CD4-positive, alpha-beta T cell (primary cell): ENCODE measurements at regions of chr3 and their contacts with region 1.

Region 1: DNA sequence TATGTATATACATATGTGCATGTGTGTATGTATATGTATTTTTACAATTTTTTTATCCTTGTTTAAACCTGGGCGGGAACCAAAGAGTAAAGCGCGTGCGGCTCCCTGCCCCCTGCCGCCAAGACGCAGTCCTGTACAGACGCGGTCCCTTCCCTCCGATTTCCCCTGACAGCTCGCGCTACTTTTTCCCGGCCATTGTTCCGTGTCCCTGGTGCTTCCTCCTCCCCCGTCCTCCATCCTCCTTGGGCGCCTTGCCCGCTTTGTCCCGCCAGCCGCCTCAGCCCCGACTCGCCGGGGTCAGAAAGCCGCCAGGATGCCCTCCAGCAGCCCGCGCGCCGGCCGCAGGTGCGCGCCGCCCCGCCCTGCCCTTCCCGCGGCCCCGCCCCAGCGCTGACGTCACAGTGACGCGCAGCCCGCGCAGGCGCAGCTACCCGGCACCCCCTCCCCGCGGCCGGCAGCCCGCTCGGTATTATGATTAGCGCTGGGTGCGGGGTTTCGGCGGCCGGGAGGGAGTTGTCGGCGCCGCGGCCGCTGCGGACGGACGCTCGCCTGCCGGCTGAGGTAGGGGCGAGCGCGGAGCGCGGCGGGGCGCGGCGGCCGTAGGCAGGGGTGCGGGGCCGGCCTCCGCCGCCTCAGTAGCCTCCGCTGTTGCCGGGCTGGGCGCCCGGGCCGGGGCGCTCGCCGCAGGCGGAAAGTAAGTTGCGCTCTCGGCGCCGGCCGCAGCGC is at the start of gene SNRK:
- DNase-seq: peak; percentile 84 to 97 (median 92)
- ATAC-seq: peak; percentile 79
- H3K4me3 ChIP-seq: peak within 1 kb of the TSS; percentile 70
- H3K4me3 Mint-ChIP-seq: peak within 1 kb of the TSS; percentile 100
- H3K27ac ChIP-seq: peak within 1 kb of the TSS; percentile 77 to 81
- H3K27ac Mint-ChIP-seq: peak within 1 kb of the TSS; percentile 100
- H3K4me1 ChIP-seq: peaks cover 32% of the 10 kb centered on the region
- H3K4me1 Mint-ChIP-seq: peaks cover 37% of the 10 kb centered on the region
- H3K27me3 ChIP-seq: no peaks in the 10 kb centered on the region
- H3K27me3 Mint-ChIP-seq: peaks cover 4% of the 10 kb centered on the region
- CTCF ChIP-seq: peak; percentile 56
- total RNA-seq, gene SNRK: 215 to 217 TPM

Region 2: GRCh38 chr3:43105596-43106292 is 180.5 kb before region 1 on chr3 and contains the start of gene POMGNT2:
- CTCF ChIA-PET with region 1: no interaction called
- POLR2A ChIA-PET with region 1: no interaction called
- intact Hi-C with region 1: loop called in 1 of 2 experiments (anchors 5 kb)
- DNase-seq: peak; percentile 77 to 95 (median 87)
- ATAC-seq: peak; percentile 94
- H3K4me3 ChIP-seq: peak within 1 kb of the TSS; percentile 68
- H3K4me3 Mint-ChIP-seq: peak within 1 kb of the TSS; percentile 89
- H3K27ac ChIP-seq: no peak within 1 kb of the TSS
- H3K27ac Mint-ChIP-seq: peak within 1 kb of the TSS; percentile 56
- H3K4me1 ChIP-seq: peaks cover 17% of the 10 kb centered on the region
- H3K4me1 Mint-ChIP-seq: peaks cover 30% of the 10 kb centered on the region
- H3K27me3 ChIP-seq: no peaks in the 10 kb centered on the region
- H3K27me3 Mint-ChIP-seq: no peaks in the 10 kb centered on the region
- CTCF ChIP-seq: no peak
- total RNA-seq, gene POMGNT2: 6.8 to 8.4 TPM

Region 3: DNA sequence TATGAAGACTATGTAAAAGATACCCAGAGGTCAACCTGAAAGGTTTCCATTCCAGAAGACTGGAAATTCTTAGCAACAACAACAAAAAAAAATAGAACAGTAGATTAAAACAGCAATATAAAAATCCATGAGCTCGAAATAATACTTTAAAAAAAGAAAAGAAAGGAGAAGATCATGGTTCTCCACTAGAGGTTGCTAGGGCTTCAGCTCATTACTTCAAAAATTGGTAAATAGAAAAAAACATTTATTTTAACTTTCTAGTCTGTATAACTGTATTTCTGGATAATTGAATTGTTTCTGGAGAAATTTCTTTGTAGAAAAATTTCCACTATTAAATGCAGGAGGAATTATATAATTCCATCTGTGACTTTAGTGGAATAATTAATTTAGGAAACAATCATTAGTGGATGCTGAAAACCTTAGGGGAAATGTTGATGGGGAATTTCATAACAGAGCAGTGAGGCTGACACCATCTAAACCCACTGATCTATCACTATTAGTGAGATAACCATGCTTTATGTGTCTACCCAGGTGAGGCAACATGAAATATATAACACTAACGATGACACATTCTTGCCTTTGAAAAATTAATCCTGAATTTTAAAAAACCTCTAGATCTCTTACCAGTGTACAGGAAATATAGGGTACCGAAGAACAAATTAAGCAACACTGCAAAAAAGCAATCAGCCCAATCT is 62.5 kb before region 1 on chr3:
- CTCF ChIA-PET with region 1: interaction called, 3 read pairs
- POLR2A ChIA-PET with region 1: interaction called, 22 read pairs
- intact Hi-C with region 1: loop called in 1 of 2 experiments (anchors 5 kb)
- DNase-seq: peak in 3 of 14 experiments; percentile 49 to 56 (median 52)
- ATAC-seq: no peak
- H3K4me3 ChIP-seq: no peak overlapping the region
- H3K4me3 Mint-ChIP-seq: peak overlapping the region; percentile 2
- H3K27ac ChIP-seq: no peak overlapping the region
- H3K27ac Mint-ChIP-seq: peak overlapping the region; percentile 86
- H3K4me1 ChIP-seq: peaks cover 28% of the 10 kb centered on the region
- H3K4me1 Mint-ChIP-seq: peaks cover 60% of the 10 kb centered on the region
- H3K27me3 ChIP-seq: no peaks in the 10 kb centered on the region
- H3K27me3 Mint-ChIP-seq: no peaks in the 10 kb centered on the region
- CTCF ChIP-seq: peak; percentile 65

Region 4: GRCh38 chr3:43296565-43296964 is 10.3 kb after region 1 on chr3:
- CTCF ChIA-PET with region 1: interaction called, 5 read pairs
- POLR2A ChIA-PET with region 1: interaction called, 122 read pairs
- intact Hi-C with region 1: loop called in 1 of 2 experiments (anchors 1 kb)
- DNase-seq: peak; percentile 32 to 90 (median 58)
- ATAC-seq: peak; percentile 91
- H3K4me3 ChIP-seq: peak overlapping the region; percentile 35
- H3K4me3 Mint-ChIP-seq: peak overlapping the region; percentile 73
- H3K27ac ChIP-seq: peak overlapping the region; percentile 59 to 68
- H3K27ac Mint-ChIP-seq: peak overlapping the region; percentile 91
- H3K4me1 ChIP-seq: peaks cover 53% of the 10 kb centered on the region
- H3K4me1 Mint-ChIP-seq: peaks cover 87% of the 10 kb centered on the region
- H3K27me3 ChIP-seq: no peaks in the 10 kb centered on the region
- H3K27me3 Mint-ChIP-seq: no peaks in the 10 kb centered on the region
- CTCF ChIP-seq: no peak

Region 5: DNA sequence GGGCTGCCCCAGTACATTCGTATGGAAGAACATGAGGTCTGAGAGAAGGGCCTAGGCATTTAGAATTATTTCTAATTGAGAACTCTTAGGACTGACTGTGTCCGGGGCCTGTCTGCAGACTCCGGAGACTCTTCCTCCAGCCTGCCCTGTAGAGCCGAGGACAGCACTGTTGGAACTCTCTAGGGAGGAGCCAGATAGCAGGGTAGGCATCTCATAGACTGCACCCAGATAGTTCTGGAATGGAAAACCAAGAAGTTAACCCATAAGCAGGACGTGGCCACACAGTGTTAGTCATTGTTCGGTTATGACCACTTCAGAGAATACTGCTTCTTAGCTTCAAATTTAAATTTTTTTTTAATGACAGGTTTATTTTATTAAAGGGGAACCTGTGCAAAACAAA is 59.6 kb after region 1 on chr3:
- CTCF ChIA-PET with region 1: no interaction called
- POLR2A ChIA-PET with region 1: interaction called, 11 read pairs
- intact Hi-C with region 1: loop called (anchors 2 to 5 kb)
- DNase-seq: no peak
- ATAC-seq: no peak
- H3K4me3 ChIP-seq: no peak overlapping the region
- H3K4me3 Mint-ChIP-seq: peak overlapping the region; percentile 58
- H3K27ac ChIP-seq: peak overlapping the region; percentile 36 to 62
- H3K27ac Mint-ChIP-seq: peak overlapping the region; percentile 96
- H3K4me1 ChIP-seq: peaks cover 71% of the 10 kb centered on the region
- H3K4me1 Mint-ChIP-seq: peaks cover 91% of the 10 kb centered on the region
- H3K27me3 ChIP-seq: no peaks in the 10 kb centered on the region
- H3K27me3 Mint-ChIP-seq: no peaks in the 10 kb centered on the region
- CTCF ChIP-seq: no peak

Region 6: GRCh38 chr3:43389388-43390254 is 103.3 kb after region 1 on chr3:
- CTCF ChIA-PET with region 1: interaction called, 3 read pairs
- POLR2A ChIA-PET with region 1: interaction called, 12 read pairs
- intact Hi-C with region 1: no loop called
- DNase-seq: peak; percentile 54 to 93 (median 68)
- ATAC-seq: peak; percentile 94
- H3K4me3 ChIP-seq: peak overlapping the region; percentile 1
- H3K4me3 Mint-ChIP-seq: peak overlapping the region; percentile 49
- H3K27ac ChIP-seq: peak overlapping the region; percentile 53 to 83
- H3K27ac Mint-ChIP-seq: peak overlapping the region; percentile 88
- H3K4me1 ChIP-seq: peaks cover 64% of the 10 kb centered on the region
- H3K4me1 Mint-ChIP-seq: peaks cover 83% of the 10 kb centered on the region
- H3K27me3 ChIP-seq: no peaks in the 10 kb centered on the region
- H3K27me3 Mint-ChIP-seq: no peaks in the 10 kb centered on the region
- CTCF ChIP-seq: no peak

Region 7: GRCh38 chr3:43411429-43411828 is 125.2 kb after region 1 on chr3:
- CTCF ChIA-PET with region 1: no interaction called
- POLR2A ChIA-PET with region 1: no interaction called
- intact Hi-C with region 1: no loop called
- DNase-seq: no peak
- ATAC-seq: no peak
- H3K4me3 ChIP-seq: no peak overlapping the region
- H3K4me3 Mint-ChIP-seq: no peak overlapping the region
- H3K27ac ChIP-seq: no peak overlapping the region
- H3K27ac Mint-ChIP-seq: no peak overlapping the region
- H3K4me1 ChIP-seq: peaks cover 18% of the 10 kb centered on the region
- H3K4me1 Mint-ChIP-seq: peaks cover 23% of the 10 kb centered on the region
- H3K27me3 ChIP-seq: no peaks in the 10 kb centered on the region
- H3K27me3 Mint-ChIP-seq: no peaks in the 10 kb centered on the region
- CTCF ChIP-seq: no peak